ENCODE measurements at regions of chr3 and their contacts with region 1.

Region 1: DNA sequence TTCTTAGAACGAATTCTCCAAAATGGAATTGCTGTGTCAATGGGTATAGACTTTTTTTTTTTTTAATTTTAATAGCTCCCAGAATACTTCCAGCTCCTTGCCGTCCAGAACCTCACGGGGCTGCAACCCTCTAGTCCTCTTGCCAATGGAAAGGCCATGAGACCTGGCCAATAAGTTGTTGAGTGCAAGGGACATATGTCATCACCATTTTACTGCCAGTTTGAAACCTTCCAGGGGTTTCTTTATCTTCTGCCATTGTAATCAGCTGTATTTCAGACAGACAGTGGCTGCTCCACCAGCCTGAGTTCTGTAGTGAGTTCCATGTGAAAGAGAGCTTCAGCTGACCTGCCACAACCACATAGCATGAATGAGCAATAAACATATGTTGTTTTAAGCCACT is 95.0 kb upstream of the PTPRG start:
- DNase-seq: no peak

Region 2: GRCh38 chr3:61493339-61493738 is 27.0 kb after region 1 on chr3:
- intact Hi-C with region 1: loop called (anchors 2 kb)
- DNase-seq: no peak

Measured in cardiac septum (tissue), 1 donor.